ENCODE measurements at regions of chr10 and their contacts with region 1.

Region 1: GRCh38 chr10:100912605-100913469 is at the start of gene SLF2:
- H3K4me3 Mint-ChIP-seq: peak within 1 kb of the TSS; percentile 98
- H3K27ac Mint-ChIP-seq: peak within 1 kb of the TSS; percentile 99
- H3K4me1 Mint-ChIP-seq: peaks cover 35% of the 10 kb centered on the region
- H3K27me3 Mint-ChIP-seq: no peaks in the 10 kb centered on the region

Region 2: GRCh38 chr10:100185364-100186252 is 727.2 kb before region 1 on chr10 and contains the start of gene ERLIN1:
- intact Hi-C with region 1: loop called (anchors 10 kb)
- H3K4me3 Mint-ChIP-seq: peak within 1 kb of the TSS; percentile 90
- H3K27ac Mint-ChIP-seq: peak within 1 kb of the TSS; percentile 96
- H3K4me1 Mint-ChIP-seq: peaks cover 57% of the 10 kb centered on the region
- H3K27me3 Mint-ChIP-seq: no peaks in the 10 kb centered on the region

Region 3: DNA sequence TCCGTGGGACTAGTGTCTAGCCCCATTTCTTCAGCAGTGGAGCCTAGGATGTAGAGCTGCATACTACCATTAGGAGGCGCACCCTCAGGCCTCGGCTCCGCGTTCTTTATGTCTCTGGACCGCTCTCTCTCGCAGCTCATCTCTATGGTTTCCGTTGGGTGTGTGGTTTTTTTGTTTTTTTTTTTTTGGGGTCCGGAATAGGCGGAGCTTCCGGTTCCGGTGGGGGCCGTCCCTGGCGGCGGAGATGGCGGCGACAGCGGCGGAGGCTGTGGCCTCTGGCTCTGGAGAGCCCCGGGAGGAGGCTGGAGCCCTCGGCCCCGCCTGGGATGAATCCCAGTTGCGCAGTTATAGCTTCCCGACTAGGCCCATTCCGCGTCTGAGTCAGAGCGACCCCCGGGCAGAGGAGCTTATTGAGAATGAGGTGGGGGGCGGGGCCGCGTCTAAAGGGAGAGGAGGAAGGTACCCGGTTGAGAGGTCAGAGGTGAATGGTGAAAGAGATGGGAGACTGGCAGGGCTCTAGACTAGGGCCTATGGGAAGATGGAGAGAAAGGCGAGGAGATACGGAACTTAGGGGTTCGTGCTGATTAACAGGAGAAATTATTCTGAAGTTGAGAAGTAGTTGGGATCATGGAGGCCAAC is 377.0 kb before region 1 on chr10 and contains the start of gene HIF1AN:
- intact Hi-C with region 1: loop called (anchors 10 kb)
- H3K4me3 Mint-ChIP-seq: no peak within 1 kb of the TSS
- H3K27ac Mint-ChIP-seq: no peak within 1 kb of the TSS
- H3K4me1 Mint-ChIP-seq: no peaks in the 10 kb centered on the region
- H3K27me3 Mint-ChIP-seq: no peaks in the 10 kb centered on the region